Left colon (tissue), 2 donors: ENCODE measurements at regions of chr10 and their contacts with region 1.

Region 1: GRCh38 chr10:69494626-69495558 is 43.6 kb downstream of the TSPAN15 start:
- DNase-seq: peak in 1 of 2 donors; percentile 34
- ATAC-seq: no peak

Region 2: GRCh38 chr10:69290993-69291392 is 203.9 kb before region 1 on chr10:
- intact Hi-C with region 1: no loop called
- DNase-seq: no peak
- ATAC-seq: no peak

Region 3: GRCh38 chr10:69413221-69413865 is 81.5 kb before region 1 on chr10:
- intact Hi-C with region 1: loop called in 1 of 2 experiments (anchors 5 kb)
- DNase-seq: peak; percentile 51 to 72
- ATAC-seq: no peak

Region 4: GRCh38 chr10:69786791-69787190 is 291.9 kb after region 1 on chr10:
- intact Hi-C with region 1: no loop called
- DNase-seq: no peak
- ATAC-seq: peak; percentile 45